HAP-1 (cell line): ENCODE measurements at regions of chr9 and their contacts with region 1.

Region 1: GRCh38 chr9:18791074-18791473 is 241.9 kb downstream of the SAXO1 start:
- DNase-seq: peak; percentile 56 to 85
- H3K4me3 ChIP-seq: no peak overlapping the region
- H3K4me1 ChIP-seq: peaks cover 7% of the 10 kb centered on the region
- H3K27me3 ChIP-seq: no peaks in the 10 kb centered on the region

Region 2: GRCh38 chr9:18255158-18255629 is 535.9 kb before region 1 on chr9:
- in situ Hi-C with region 1: loop called (anchors 25 kb)
- DNase-seq: peak; percentile 53 to 87
- H3K4me3 ChIP-seq: no peak overlapping the region
- H3K4me1 ChIP-seq: peaks cover 3% of the 10 kb centered on the region; the same call in 1 of the 2 replicates
- H3K27me3 ChIP-seq: no peaks in the 10 kb centered on the region

Region 3: GRCh38 chr9:18692268-18692667 is 98.8 kb before region 1 on chr9:
- in situ Hi-C with region 1: loop called (anchors 25 kb)
- DNase-seq: no peak
- H3K4me3 ChIP-seq: no peak overlapping the region
- H3K4me1 ChIP-seq: no peaks in the 10 kb centered on the region
- H3K27me3 ChIP-seq: no peaks in the 10 kb centered on the region

Region 4: DNA sequence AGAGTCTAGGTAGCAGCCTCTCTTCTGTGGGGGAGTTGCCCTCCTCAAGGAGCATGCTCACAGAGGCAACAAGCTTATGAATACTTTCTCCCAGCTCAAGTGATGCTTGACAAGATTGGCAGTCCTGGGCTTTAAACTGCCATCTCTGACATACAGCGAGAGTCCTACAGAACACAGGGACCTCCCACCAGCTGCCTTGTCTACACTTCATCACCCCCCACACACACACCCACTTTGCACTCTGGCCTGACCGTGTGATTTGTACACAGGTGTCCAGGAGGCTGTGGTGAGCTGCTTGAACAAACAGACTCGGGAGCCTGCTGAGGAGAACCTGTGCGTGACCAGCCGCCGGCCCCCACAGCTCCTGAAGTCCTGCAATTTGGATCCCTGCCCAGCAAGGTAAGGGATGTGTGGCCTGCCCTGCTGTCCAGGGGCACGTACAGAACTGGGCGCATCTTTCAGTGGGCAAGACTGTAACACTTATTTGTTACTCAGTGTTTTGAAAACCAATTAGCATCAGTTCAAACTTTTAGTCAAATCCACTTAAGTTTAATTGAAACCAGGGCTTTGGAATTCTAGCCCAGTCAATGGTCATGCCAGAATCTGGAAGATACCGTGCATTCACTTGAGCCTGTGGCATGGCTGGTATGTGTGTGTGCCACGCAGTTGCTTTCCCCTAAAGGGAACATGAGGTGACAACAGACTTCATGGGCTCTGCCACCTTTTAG is 69.6 kb before region 1 on chr9:
- in situ Hi-C with region 1: no loop called
- DNase-seq: no peak
- H3K4me3 ChIP-seq: no peak overlapping the region
- H3K4me1 ChIP-seq: no peaks in the 10 kb centered on the region
- H3K27me3 ChIP-seq: no peaks in the 10 kb centered on the region